Activated T-helper 2 cell treated with anti-CD3 and anti-CD28 coated beads, Interferon-gamma antibody, Interleukin-2, Interleukin-4, amounts not matched to agents 10 μg/mL and 5 μg/mL and 100 μg/mL, durations not matched to agents 14 hours and 24 hours and 36 hours (primary cell): ENCODE measurements at regions of chrX and their contacts with region 1.

Region 1: GRCh38 chrX:149470955-149471354 is 34.2 kb downstream of the IDS start:
- DNase-seq: peak; percentile 47
- H3K4me3 Mint-ChIP-seq: no peak overlapping the region
- H3K27ac Mint-ChIP-seq: no peak overlapping the region
- H3K4me1 Mint-ChIP-seq: peaks cover 2% of the 10 kb centered on the region
- H3K27me3 Mint-ChIP-seq: peaks cover 4% of the 10 kb centered on the region

Region 2: DNA sequence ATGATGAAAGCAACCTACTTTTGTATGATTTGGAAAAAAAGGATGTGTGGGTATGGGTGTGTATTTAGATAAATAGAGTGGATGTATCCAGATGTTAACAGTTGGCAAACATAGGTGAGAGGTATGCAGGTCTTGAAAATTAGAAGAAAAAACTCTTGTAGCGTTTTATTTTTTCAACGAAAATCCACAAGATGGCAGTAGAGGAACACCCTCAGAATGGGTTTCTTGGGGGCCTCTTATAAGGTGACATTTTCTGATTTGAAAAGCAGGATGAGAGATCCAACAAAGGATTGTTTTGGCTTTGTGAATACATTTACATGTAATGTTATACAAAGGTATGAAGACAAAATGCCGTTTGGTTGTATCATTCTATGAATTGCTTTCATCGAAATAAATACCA is 1421.5 kb before region 1 on chrX:
- intact Hi-C with region 1: loop called (anchors 1 kb)
- DNase-seq: no peak
- H3K4me3 Mint-ChIP-seq: no peak overlapping the region
- H3K27ac Mint-ChIP-seq: no peak overlapping the region
- H3K4me1 Mint-ChIP-seq: no peaks in the 10 kb centered on the region
- H3K27me3 Mint-ChIP-seq: peaks cover 4% of the 10 kb centered on the region

Region 3: DNA sequence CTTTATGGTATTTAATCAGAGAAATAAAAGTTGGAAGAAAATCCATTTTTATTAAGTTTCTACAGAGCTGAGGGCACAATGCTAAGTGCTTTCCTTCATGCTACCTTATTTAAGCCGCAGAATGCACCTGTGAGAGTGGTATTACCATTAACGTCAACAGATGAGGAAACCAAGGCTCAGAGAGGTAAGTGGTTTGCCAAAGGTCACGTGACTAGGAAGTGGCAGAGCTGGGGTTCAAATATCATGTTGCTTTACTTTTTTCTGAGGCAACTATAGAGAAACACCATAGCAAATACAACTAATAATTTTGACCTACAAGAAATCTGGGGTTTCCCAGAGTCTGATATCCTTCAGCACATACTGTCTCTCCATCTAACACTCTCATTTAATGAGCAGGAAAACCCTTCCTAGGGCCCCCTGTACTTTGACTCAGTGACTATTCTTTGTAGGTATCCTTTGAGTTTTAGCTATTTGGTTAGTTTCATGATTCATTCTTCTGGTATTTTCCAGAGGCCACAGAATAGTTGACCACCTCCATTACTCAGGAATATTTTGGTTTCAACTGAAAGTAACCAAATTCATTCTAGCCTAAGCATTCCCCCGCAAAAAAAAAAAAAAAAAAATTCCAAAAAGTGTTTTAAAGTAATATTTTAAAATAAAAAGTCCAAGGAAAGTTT is 106.0 kb before region 1 on chrX:
- intact Hi-C with region 1: no loop called
- DNase-seq: no peak
- H3K4me3 Mint-ChIP-seq: no peak overlapping the region
- H3K27ac Mint-ChIP-seq: no peak overlapping the region
- H3K4me1 Mint-ChIP-seq: no peaks in the 10 kb centered on the region
- H3K27me3 Mint-ChIP-seq: peaks cover 2% of the 10 kb centered on the region